Heart left ventricle (tissue), 16 donors: ENCODE measurements at regions of chr11 and their contacts with region 1.

Region 1: GRCh38 chr11:18395735-18396504 is 1.6 kb downstream of the LDHA start:
- DNase-seq: peak; percentile 98 to 100 (median 99)
- ATAC-seq: peak; percentile 88 to 97 (median 94)
- H3K4me3 ChIP-seq: peak overlapping the region; percentile 61 to 98 (median 86)
- H3K27ac ChIP-seq: peak overlapping the region; percentile 84 to 99 (median 96)
- H3K4me1 ChIP-seq: peaks cover 2 to 28% (median 12%) of the 10 kb centered on the region in 12 donors
- H3K27me3 ChIP-seq: no peaks in the 10 kb centered on the region
- CTCF ChIP-seq: no peak
- POLR2A ChIP-seq: peak in 1 of 2 donors; percentile 79

Region 2: GRCh38 chr11:18383388-18384156 is 12.3 kb before region 1 on chr11:
- intact Hi-C with region 1: loop called in 2 of 10 experiments (anchors 1 kb)
- DNase-seq: peak; percentile 57 to 92 (median 75)
- ATAC-seq: peak; percentile 83 to 96 (median 91)
- H3K4me3 ChIP-seq: peak overlapping the region in 3 of 12 donors; percentile 4 to 32 (median 6)
- H3K27ac ChIP-seq: peak overlapping the region; percentile 90 to 100 (median 96)
- H3K4me1 ChIP-seq: peaks cover 0 to 32% (median 21%) of the 10 kb centered on the region in 12 donors
- H3K27me3 ChIP-seq: no peaks in the 10 kb centered on the region
- CTCF ChIP-seq: no peak
- POLR2A ChIP-seq: peak in 1 of 2 donors; percentile 37

Region 3: GRCh38 chr11:18526521-18527296 is 130.8 kb after region 1 on chr11 and contains the start of gene TSG101:
- intact Hi-C with region 1: loop called in 5 of 10 experiments (anchors 2 to 10 kb)
- DNase-seq: peak; percentile 94 to 97 (median 97)
- ATAC-seq: peak; percentile 99
- H3K4me3 ChIP-seq: peak within 1 kb of the TSS; percentile 48 to 96 (median 90)
- H3K27ac ChIP-seq: peak within 1 kb of the TSS; percentile 83 to 98 (median 94)
- H3K4me1 ChIP-seq: peaks cover 0 to 39% (median 16%) of the 10 kb centered on the region in 12 donors
- H3K27me3 ChIP-seq: no peaks in the 10 kb centered on the region
- CTCF ChIP-seq: no peak
- POLR2A ChIP-seq: peak; percentile 7 to 87
- total RNA-seq, gene TSG101: 58.6 to 156 (median 69.1) TPM